ENCODE measurements at regions of chr17 and their contacts with region 1.

Region 1: GRCh38 chr17:78019367-78019975 is 61.0 kb downstream of the TNRC6C start:
- DNase-seq: no peak
- H3K4me3 Mint-ChIP-seq: no peak overlapping the region
- H3K27ac Mint-ChIP-seq: peak overlapping the region; percentile 47
- H3K4me1 Mint-ChIP-seq: peaks cover 27% of the 10 kb centered on the region
- H3K27me3 Mint-ChIP-seq: no peaks in the 10 kb centered on the region

Region 2: GRCh38 chr17:77856551-77857305 is 162.7 kb before region 1 on chr17:
- CTCF ChIA-PET with region 1: no interaction called
- intact Hi-C with region 1: no loop called
- DNase-seq: no peak
- H3K4me3 Mint-ChIP-seq: no peak overlapping the region
- H3K27ac Mint-ChIP-seq: no peak overlapping the region
- H3K4me1 Mint-ChIP-seq: peaks cover 19% of the 10 kb centered on the region
- H3K27me3 Mint-ChIP-seq: no peaks in the 10 kb centered on the region

Region 3: DNA sequence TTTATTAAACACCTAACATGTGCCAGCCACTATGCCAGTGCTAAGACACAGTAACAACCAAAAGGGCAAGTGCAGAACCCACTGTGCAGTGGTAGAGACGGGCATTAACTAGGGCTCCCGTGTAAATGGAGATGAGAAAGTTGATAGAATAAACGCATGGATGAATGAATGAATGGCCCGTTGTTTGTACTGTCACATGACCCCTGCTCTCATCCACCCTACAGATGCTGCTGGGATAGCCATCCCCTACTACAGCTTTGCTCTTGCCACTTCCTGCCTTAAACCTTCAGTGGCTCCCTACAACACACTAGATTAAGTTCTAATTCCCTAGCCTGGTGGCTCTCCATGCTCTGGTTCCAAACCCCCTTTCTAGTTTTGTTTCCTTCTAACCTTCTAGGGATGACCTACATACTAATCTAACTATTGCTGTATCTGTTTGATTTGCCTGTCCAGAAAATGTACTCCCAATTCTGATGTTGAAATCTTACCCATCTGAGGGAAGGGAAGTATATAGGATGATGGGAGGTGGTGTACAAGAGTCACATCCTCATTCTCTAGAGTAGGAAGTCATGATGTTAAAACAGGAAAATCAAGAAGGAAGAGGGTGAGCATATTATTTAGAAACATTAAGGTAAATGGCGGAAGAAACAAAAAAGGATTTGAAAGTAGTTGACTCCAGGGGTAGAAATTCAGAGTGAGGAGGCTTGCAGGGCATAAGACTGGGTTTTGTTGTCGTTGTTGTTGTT is 72.4 kb before region 1 on chr17:
- CTCF ChIA-PET with region 1: no interaction called
- intact Hi-C with region 1: no loop called
- DNase-seq: no peak
- H3K4me3 Mint-ChIP-seq: no peak overlapping the region
- H3K27ac Mint-ChIP-seq: no peak overlapping the region
- H3K4me1 Mint-ChIP-seq: no peaks in the 10 kb centered on the region
- H3K27me3 Mint-ChIP-seq: peaks cover 2% of the 10 kb centered on the region

Region 4: DNA sequence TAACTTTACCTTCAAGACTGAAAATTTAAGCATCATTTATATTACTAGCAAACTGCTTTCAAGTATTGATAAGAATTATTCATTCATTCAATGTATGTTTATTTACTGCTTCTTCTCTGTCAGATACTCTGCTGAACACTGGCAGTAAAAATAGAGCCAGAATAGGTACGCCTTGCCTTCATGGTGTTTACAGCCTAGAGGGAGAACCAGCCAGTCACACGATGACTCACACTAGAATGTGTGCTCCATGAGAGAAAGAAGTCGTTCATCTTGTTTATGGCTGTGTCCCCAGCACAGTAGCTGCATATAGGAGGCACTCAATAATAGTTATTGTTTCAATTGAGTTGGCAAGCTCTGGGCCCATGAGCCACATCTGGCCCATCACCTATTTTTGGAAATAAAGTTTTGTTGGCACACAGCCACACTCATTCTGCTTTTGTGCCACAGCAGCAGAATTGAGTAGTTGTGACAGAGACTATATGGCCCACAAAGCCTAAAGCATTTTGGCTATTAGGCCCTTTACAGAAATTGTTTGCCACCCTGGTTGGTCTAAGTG is 24.9 kb after region 1 on chr17:
- CTCF ChIA-PET with region 1: interaction called, 11 read pairs
- intact Hi-C with region 1: loop called (anchors 2 kb)
- DNase-seq: no peak
- H3K4me3 Mint-ChIP-seq: no peak overlapping the region
- H3K27ac Mint-ChIP-seq: no peak overlapping the region
- H3K4me1 Mint-ChIP-seq: peaks cover 34% of the 10 kb centered on the region
- H3K27me3 Mint-ChIP-seq: no peaks in the 10 kb centered on the region

Region 5: GRCh38 chr17:78063489-78063888 is 44.0 kb after region 1 on chr17:
- CTCF ChIA-PET with region 1: interaction called, 7 read pairs
- intact Hi-C with region 1: loop called (anchors 1 kb)
- DNase-seq: no peak
- H3K4me3 Mint-ChIP-seq: no peak overlapping the region
- H3K27ac Mint-ChIP-seq: no peak overlapping the region
- H3K4me1 Mint-ChIP-seq: peaks cover 29% of the 10 kb centered on the region
- H3K27me3 Mint-ChIP-seq: no peaks in the 10 kb centered on the region

Region 6: DNA sequence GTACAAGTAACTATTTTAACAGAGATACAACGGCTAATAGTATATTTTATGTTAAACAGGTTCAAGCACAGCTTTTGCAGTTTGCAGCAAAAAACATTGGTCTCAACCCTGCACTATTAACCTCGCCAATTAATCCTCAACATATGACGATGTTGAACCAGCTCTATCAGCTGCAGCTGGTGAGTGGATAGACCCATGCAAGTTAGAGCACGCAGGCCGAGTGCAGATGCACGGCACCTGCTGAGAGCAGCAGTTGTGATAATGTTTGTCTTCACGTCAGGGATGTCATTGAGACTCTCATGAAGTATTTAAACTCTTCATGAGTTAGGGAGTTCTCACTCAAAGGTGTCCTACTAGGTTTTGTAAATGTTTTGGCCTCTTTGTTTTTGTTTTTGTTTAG is 63.5 kb after region 1 on chr17:
- CTCF ChIA-PET with region 1: interaction called, 16 read pairs
- intact Hi-C with region 1: loop called (anchors 1 kb)
- DNase-seq: no peak
- H3K4me3 Mint-ChIP-seq: no peak overlapping the region
- H3K27ac Mint-ChIP-seq: no peak overlapping the region
- H3K4me1 Mint-ChIP-seq: no peaks in the 10 kb centered on the region
- H3K27me3 Mint-ChIP-seq: no peaks in the 10 kb centered on the region

Region 7: GRCh38 chr17:78112518-78113226 is 93.2 kb after region 1 on chr17:
- CTCF ChIA-PET with region 1: interaction called, 5 read pairs
- intact Hi-C with region 1: loop called (anchors 5 kb)
- DNase-seq: peak; percentile 84
- H3K4me3 Mint-ChIP-seq: no peak overlapping the region
- H3K27ac Mint-ChIP-seq: peak overlapping the region; percentile 88
- H3K4me1 Mint-ChIP-seq: peaks cover 37% of the 10 kb centered on the region
- H3K27me3 Mint-ChIP-seq: no peaks in the 10 kb centered on the region

Region 8: GRCh38 chr17:78133971-78134898 is 114.8 kb after region 1 on chr17:
- CTCF ChIA-PET with region 1: interaction called, 3 read pairs
- intact Hi-C with region 1: loop called (anchors 1 kb)
- DNase-seq: peak; percentile 90
- H3K4me3 Mint-ChIP-seq: peak overlapping the region; percentile 60
- H3K27ac Mint-ChIP-seq: peak overlapping the region; percentile 7
- H3K4me1 Mint-ChIP-seq: peaks cover 62% of the 10 kb centered on the region
- H3K27me3 Mint-ChIP-seq: no peaks in the 10 kb centered on the region

Region 9: DNA sequence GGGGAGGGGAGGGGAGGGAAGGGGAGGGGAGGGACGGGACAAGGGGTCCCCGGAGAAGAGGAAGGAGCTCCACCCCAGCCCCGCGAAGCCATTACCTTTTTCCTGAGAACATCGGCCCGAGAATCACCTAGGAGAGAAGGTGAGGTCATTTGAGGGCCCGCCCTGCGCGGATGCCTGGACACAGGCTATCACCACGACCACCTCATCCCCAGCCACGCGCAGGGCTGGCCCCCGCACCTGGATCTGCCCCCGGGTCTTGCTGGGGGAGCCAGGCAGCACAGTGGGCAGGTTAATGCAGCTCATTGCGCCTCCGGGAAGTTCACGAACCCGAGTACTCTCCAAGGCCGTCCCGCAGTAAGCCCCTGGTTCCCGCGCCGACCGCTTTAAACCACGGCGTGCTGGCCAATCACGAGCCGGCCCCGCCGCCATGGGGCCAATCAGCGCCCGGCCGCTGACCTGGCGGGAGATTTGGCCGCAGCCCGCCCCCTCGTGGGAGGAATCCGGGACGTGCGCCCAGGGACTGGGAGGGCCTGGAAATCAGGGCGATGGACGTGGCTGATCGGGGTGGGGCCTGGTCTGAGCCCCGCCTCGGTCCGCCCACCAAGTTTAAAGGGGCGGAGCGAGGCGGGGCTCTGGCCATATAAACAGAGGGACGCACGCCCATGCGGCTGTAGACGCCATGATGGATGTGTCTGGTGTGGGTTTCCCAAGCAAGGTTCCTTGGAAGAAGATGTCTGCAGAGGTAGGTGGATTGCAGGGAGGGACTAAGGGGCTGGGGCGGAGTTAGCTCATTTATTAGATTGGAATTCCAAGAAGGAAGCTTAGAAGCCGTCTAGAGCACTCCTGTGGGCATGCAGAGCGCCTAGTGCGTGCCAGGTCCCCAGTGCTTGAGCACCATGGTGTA is 167.5 kb after region 1 on chr17 and contains the starts of genes AFMID and TK1:
- CTCF ChIA-PET with region 1: no interaction called
- intact Hi-C with region 1: loop called (anchors 5 kb)
- DNase-seq: peak; percentile 97
- H3K4me3 Mint-ChIP-seq: peak within 1 kb of the TSS; percentile 83
- H3K27ac Mint-ChIP-seq: peak within 1 kb of the TSS; percentile 70
- H3K4me1 Mint-ChIP-seq: peaks cover 28% of the 10 kb centered on the region
- H3K27me3 Mint-ChIP-seq: no peaks in the 10 kb centered on the region
- total RNA-seq, gene AFMID: 13.6 to 13.7 TPM
- total RNA-seq, gene TK1: 165 to 173 TPM

Region 10: DNA sequence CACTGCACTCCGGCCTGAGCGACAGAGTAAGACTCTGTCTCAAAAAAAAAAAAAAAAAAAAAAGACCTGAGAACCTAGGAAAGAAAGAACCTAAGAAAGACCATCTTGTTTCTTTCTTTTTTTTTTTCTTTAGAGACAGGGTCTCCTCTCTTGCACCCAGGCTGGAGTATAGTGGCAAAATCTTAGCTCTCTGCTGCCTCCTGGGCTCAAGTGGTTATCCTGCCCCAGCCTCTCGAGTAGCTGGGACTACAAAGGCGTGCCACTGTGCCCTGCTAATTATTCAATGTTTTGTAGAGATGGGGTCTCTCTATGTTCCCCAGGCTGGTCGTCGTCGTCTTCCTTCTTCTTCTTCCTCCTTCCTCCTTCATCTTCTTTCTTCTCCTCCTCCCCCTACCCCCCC is 186.8 kb after region 1 on chr17:
- CTCF ChIA-PET with region 1: no interaction called
- intact Hi-C with region 1: no loop called
- DNase-seq: no peak
- H3K4me3 Mint-ChIP-seq: no peak overlapping the region
- H3K27ac Mint-ChIP-seq: no peak overlapping the region
- H3K4me1 Mint-ChIP-seq: no peaks in the 10 kb centered on the region
- H3K27me3 Mint-ChIP-seq: no peaks in the 10 kb centered on the region

Region 11: DNA sequence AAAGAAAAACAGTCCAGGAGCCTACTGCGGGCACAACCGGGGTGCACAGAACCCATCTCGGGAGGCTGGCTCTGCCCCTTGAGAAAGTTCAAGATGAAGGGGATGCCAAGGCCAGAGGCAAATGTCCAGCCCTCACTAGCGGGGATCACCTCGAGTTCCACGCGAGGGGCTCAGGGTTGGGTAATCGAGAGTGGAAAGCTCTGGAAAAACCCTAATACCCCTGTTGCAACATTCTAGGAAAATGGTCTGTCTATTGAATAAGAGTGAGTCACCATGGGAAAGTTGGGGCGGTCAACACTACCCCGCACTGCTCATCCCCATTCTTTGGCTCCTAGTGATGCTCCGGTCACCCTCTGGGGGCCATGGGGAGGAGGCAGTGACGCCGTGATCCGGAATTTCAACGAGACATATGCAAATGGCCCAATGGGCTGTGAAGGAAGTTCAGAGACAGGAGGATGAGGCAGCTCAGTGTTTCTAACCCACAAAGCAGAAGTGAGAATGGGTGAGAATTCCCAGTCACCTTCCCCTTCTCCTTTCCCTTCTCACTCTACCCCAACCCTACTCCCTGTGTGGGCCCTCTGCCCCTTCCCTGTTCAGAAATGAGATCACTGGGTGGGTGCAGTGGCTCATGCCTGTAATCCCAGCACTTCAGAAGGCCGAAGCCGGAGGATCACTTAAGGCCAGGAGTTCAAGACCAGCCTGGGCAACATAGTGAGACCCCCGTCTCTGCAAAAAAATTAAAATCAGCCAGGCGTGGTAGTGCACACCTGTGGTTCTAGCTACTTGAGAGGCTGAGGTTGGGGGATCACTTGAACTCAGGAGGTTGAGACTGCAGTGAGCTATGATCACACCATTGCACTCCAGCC is 318.0 kb after region 1 on chr17:
- CTCF ChIA-PET with region 1: no interaction called
- intact Hi-C with region 1: no loop called
- DNase-seq: no peak
- H3K4me3 Mint-ChIP-seq: no peak overlapping the region
- H3K27ac Mint-ChIP-seq: peak overlapping the region; percentile 44
- H3K4me1 Mint-ChIP-seq: peaks cover 49% of the 10 kb centered on the region
- H3K27me3 Mint-ChIP-seq: no peaks in the 10 kb centered on the region